CD8-positive, alpha-beta T cell (primary cell): ENCODE measurements at regions of chr2 and their contacts with region 1.

Region 1: GRCh38 chr2:99317166-99317872 is 16.3 kb upstream of the LYG1 start:
- DNase-seq: no peak
- ATAC-seq: no peak
- H3K4me3 ChIP-seq: no peak overlapping the region
- H3K4me3 Mint-ChIP-seq: no peak overlapping the region
- H3K27ac ChIP-seq: no peak overlapping the region
- H3K27ac Mint-ChIP-seq: no peak overlapping the region
- H3K4me1 ChIP-seq: no peaks in the 10 kb centered on the region
- H3K4me1 Mint-ChIP-seq: no peaks in the 10 kb centered on the region
- H3K27me3 ChIP-seq: no peaks in the 10 kb centered on the region
- H3K27me3 Mint-ChIP-seq: no peaks in the 10 kb centered on the region
- CTCF ChIP-seq: no peak

Region 2: DNA sequence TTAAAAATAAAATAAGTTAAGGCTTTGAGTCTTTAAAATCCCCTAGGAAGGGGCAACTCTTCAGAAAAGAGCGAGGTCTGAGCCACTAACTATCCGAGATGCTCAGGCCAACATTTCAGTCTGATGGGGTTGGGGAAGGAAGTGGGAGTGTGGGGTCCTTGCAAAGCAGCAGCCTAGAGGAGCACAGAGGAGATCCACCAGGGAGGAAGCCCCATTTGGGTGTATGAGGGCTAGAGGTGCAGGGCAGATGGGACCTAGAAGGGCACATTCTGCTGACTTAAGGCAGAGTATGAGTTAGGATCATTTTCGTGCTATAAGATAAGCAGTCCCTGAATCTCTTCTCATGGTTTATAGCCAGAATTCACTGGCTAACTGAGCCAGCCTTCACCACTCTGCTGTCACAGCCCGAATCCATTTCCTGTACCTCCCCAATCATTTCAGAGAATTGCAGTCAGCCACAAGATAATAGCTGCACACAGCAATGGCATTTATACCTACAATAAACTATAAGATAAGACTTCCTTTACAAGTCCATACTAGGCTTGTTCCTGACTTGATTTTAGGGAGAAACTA is 99.3 kb before region 1 on chr2:
- CTCF ChIA-PET with region 1: no interaction called
- POLR2A ChIA-PET with region 1: no interaction called
- intact Hi-C with region 1: loop called in 1 of 2 experiments (anchors 10 kb)
- DNase-seq: no peak
- ATAC-seq: no peak
- H3K4me3 ChIP-seq: no peak overlapping the region
- H3K4me3 Mint-ChIP-seq: no peak overlapping the region
- H3K27ac ChIP-seq: no peak overlapping the region
- H3K27ac Mint-ChIP-seq: no peak overlapping the region
- H3K4me1 ChIP-seq: no peaks in the 10 kb centered on the region
- H3K4me1 Mint-ChIP-seq: no peaks in the 10 kb centered on the region
- H3K27me3 ChIP-seq: no peaks in the 10 kb centered on the region
- H3K27me3 Mint-ChIP-seq: no peaks in the 10 kb centered on the region
- CTCF ChIP-seq: no peak

Region 3: DNA sequence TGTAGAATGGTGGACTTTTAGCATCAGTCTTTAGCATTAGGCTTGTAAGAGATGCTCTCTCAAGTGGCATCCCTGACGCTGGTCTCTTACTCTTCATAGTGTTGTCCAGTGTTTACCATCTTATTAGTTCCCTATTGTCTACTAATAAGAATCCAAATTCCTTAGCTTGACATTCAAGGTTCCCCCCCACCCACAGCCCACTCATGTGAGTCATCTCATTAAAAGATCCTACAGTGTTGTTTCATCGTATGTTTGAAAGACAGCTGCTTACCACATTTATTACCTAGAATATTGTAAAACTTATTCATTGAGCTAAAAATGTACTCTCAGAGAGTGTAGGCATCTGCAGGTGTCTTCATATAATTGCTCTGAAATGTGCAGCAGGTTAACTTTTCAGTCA is 48.3 kb after region 1 on chr2:
- CTCF ChIA-PET with region 1: no interaction called
- POLR2A ChIA-PET with region 1: no interaction called
- intact Hi-C with region 1: no loop called
- DNase-seq: no peak
- ATAC-seq: no peak
- H3K4me3 ChIP-seq: no peak overlapping the region
- H3K4me3 Mint-ChIP-seq: no peak overlapping the region
- H3K27ac ChIP-seq: no peak overlapping the region
- H3K27ac Mint-ChIP-seq: no peak overlapping the region
- H3K4me1 ChIP-seq: no peaks in the 10 kb centered on the region
- H3K4me1 Mint-ChIP-seq: no peaks in the 10 kb centered on the region
- H3K27me3 ChIP-seq: no peaks in the 10 kb centered on the region
- H3K27me3 Mint-ChIP-seq: no peaks in the 10 kb centered on the region
- CTCF ChIP-seq: no peak